Left colon (tissue), 2 donors: ENCODE measurements at regions of chr6 and their contacts with region 1.

Region 1: GRCh38 chr6:53651764-53652401 is 13.7 kb downstream of the KLHL31 start:
- DNase-seq: peak; percentile 86 to 90
- ATAC-seq: peak; percentile 96

Region 2: DNA sequence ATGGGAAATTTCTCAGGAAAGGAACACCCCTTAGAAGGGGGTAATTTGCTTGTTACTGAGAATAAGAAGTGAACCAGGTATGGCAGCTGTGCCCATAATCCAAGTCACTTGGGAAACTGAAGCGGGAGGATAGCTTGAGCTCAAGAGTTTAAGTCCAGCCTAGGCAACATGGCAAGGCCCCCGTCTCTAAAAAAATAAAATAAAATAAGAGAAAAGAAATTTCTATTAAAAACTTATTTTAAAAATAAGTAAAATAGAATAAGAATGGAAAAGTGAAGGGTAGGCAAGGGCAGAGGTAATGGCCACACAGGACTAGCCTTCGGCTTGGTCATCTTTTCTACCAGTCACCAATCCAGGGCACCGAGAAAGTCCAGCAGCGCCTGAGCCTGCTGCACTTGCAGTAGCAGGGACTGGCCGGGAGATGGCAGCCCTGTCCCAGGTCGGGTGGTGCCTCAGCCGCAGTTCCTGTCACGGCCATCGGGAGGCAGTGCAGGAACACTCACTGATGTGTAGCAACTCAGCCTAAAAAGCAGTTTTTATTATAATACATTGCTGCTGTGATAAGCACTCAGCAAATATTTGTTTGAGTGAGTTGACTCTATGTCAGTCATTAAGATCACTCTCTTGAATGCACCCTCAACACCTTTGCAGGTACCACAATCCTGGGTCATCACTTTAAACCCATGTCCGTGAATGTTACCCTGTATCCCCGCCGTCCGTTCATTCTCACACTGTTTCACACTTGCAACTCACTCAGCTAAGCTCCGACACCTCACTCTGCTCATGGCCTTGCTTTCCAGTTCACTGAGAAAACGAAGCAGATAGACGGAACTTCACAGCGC is 480.1 kb before region 1 on chr6:
- intact Hi-C with region 1: loop called in 1 of 2 experiments (anchors 10 kb)
- DNase-seq: peak; percentile 71 to 89
- ATAC-seq: peak; percentile 97

Region 3: GRCh38 chr6:53492860-53493634 is 158.8 kb before region 1 on chr6:
- intact Hi-C with region 1: loop called in 1 of 2 experiments (anchors 10 kb)
- DNase-seq: no peak
- ATAC-seq: peak; percentile 56

Region 4: GRCh38 chr6:53506872-53507271 is 145.0 kb before region 1 on chr6:
- intact Hi-C with region 1: loop called in 1 of 2 experiments (anchors 5 kb)
- DNase-seq: no peak
- ATAC-seq: no peak

Region 5: GRCh38 chr6:53544470-53545308 is 107.2 kb before region 1 on chr6 and contains the start of gene GCLC:
- intact Hi-C with region 1: loop called in 1 of 2 experiments (anchors 2 kb)
- DNase-seq: peak; percentile 96 to 97
- ATAC-seq: peak; percentile 68
- total RNA-seq, gene GCLC: 37.1 to 47.5 TPM

Region 6: DNA sequence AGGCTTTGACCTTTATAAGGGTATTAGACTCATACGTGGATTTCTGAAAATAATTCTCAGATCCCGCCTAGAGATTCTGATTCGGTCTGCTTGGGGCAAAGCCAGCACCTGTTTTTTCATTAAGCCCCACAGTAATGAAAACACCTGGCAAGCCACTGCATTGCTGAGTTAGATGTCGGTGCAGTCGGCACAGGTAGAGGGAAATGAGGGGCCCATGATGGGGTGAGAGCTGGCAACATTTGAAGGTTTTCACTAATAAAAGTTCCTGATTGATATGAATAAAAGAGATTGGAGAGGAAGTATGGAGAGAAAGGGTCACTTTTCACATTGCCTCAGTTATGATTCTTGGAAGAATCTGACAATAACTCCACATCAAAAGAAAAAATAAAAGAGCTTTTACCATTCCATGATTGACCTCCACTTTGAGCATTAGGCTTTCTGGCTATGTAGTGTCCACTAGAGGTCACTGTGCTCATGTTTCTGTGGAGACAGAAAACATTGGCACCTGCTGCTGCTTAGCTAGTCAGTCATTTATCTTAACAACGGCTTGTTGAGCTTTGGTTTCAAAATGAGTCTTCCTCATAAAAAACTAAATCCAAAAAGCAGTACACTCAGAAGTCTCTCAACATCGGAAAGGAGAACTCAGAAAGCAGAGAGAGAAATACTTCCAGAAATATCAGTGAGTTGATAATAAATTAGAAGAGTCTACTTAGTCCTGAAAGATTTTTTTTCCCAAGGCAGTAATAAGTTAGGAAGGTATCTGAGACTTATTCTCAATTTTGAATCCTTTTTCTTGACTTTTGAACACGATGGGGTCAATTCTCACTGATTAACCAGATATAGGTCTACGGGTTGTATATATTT is 66.9 kb after region 1 on chr6:
- intact Hi-C with region 1: loop called in 1 of 2 experiments (anchors 10 kb)
- DNase-seq: peak; percentile 25 to 51
- ATAC-seq: peak; percentile 88